Endothelial cell of umbilical vein (primary cell): ENCODE measurements at regions of chr13 and their contacts with region 1.

Region 1: DNA sequence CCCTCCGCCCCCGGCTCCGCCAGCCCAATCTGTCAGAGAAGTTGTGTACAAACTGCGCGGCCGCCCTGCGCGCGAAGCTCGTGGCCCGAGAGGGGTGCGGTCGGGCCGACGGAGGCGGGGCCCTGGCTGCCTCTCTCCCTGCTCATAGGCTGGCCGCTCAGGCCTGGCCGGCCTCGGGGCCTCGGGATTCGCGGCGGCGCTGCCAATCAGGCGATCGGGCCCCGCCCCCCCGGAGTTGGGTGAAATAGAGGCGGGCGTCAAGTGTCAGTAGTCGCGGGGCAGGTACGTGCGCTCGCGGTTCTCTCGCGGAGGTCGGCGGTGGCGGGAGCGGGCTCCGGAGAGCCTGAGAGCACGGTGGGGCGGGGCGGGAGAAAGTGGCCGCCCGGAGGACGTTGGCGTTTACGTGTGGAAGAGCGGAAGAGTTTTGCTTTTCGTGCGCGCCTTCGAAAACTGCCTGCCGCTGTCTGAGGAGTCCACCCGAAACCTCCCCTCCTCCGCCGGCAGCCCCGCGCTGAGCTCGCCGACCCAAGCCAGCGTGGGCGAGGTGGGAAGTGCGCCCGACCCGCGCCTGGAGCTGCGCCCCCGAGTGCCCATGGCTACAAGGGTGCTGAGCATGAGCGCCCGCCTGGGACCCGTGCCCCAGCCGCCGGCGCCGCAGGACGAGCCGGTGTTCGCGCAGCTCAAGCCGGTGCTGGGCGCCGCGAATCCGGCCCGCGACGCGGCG is at the start of gene KLF5:
- DNase-seq: peak; percentile 95
- H3K4me3 ChIP-seq: peak within 1 kb of the TSS; percentile 42 to 57 (median 57)
- H3K27ac ChIP-seq: peak within 1 kb of the TSS; percentile 5
- H3K4me1 ChIP-seq: peaks cover 37% of the 10 kb centered on the region
- H3K27me3 ChIP-seq: no peaks in the 10 kb centered on the region
- CTCF ChIP-seq: no peak
- POLR2A ChIP-seq: no peak
- total RNA-seq, gene KLF5: 1.7 and 1.9 TPM in 2 replicates

Region 2: GRCh38 chr13:72781451-72782439 is 277.2 kb before region 1 on chr13 and contains the starts of genes DIS3 and PIBF1:
- CTCF ChIA-PET with region 1: no interaction called
- POLR2A ChIA-PET with region 1: no interaction called
- dilution Hi-C with region 1: no loop called
- intact Hi-C with region 1: loop called (anchors 2 kb)
- DNase-seq: peak; percentile 98
- H3K4me3 ChIP-seq: peak within 1 kb of the TSS; percentile 69 to 96 (median 77)
- H3K27ac ChIP-seq: peak within 1 kb of the TSS; percentile 71
- H3K4me1 ChIP-seq: peaks cover 25% of the 10 kb centered on the region
- H3K27me3 ChIP-seq: no peaks in the 10 kb centered on the region
- CTCF ChIP-seq: no peak
- POLR2A ChIP-seq: peak; percentile 77
- total RNA-seq, gene DIS3: 31.4 and 32.8 TPM in 2 replicates
- total RNA-seq, gene PIBF1: 18.2 and 18.4 TPM in 2 replicates

Region 3: GRCh38 chr13:72839831-72840426 is 219.0 kb before region 1 on chr13:
- CTCF ChIA-PET with region 1: interaction called, 3 read pairs
- POLR2A ChIA-PET with region 1: no interaction called
- dilution Hi-C with region 1: no loop called
- intact Hi-C with region 1: loop called (anchors 5 kb)
- DNase-seq: peak; percentile 45
- H3K4me3 ChIP-seq: no peak overlapping the region
- H3K27ac ChIP-seq: no peak overlapping the region
- H3K4me1 ChIP-seq: no peaks in the 10 kb centered on the region
- H3K27me3 ChIP-seq: no peaks in the 10 kb centered on the region
- CTCF ChIP-seq: peak; percentile 69 to 75
- POLR2A ChIP-seq: no peak

Region 4: DNA sequence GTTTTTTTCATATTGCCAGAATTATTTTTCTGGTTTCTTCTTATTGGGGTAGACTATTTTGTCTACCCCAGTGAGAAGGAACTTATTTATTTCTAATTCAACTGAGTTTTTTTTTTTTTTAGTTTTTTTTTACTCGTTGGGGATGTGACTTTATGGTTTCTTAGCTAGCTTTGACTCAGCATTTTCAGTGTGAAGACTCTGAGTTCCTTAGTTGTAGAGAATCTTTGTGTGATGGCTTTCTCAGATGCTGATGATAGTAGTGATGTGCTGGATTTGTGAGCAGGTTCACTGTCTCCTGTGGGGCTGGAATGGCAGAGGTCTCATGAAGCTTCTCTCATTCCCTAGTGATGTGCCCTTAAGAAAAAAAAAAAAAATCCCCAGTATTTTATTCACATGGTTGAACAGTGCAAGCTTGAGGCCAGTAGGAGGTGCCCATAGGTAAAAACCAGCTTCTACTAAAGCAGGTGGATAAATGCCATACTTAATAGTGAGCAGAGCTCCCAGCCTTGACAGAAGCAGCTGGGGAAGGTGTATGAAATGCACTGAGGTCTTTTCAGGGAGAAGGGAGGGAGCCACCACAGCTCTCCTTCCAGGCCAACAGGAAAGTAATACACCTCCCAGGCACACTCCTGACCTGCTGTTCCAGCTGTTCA is 106.2 kb before region 1 on chr13:
- CTCF ChIA-PET with region 1: no interaction called
- POLR2A ChIA-PET with region 1: no interaction called
- dilution Hi-C with region 1: no loop called
- intact Hi-C with region 1: no loop called
- DNase-seq: no peak
- H3K4me3 ChIP-seq: no peak overlapping the region
- H3K27ac ChIP-seq: no peak overlapping the region
- H3K4me1 ChIP-seq: no peaks in the 10 kb centered on the region
- H3K27me3 ChIP-seq: no peaks in the 10 kb centered on the region
- CTCF ChIP-seq: no peak
- POLR2A ChIP-seq: no peak

Region 5: DNA sequence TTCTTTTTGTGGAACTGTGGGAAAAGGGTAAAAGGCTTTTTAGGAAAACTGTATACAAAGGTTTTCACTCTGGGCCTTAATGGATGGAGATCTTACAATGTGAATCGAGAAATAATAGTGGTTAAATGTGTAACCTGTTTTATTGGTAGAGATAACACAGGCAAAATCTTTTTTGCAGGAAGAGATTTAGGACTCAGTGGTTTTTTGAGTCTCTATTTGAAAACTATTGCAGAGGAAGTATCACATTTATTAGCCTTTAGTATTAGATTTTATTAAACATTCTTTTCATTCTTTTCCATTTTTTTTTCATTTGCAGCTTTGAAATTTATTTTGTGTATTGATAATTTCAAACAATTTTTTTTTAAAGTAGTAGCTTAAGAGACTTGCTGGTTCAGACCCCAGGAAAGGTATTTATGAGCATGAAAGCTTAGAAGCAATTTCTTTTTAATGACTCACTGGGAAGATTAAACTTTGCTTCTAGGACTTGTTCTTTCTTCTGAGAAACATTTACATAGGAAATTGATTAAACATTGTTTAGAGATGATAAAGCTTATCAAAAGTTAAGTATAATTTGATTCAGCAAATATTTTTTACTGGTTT is 10.4 kb after region 1 on chr13:
- CTCF ChIA-PET with region 1: interaction called, 10 read pairs
- POLR2A ChIA-PET with region 1: interaction called, 12 read pairs
- dilution Hi-C with region 1: no loop called
- intact Hi-C with region 1: no loop called
- DNase-seq: no peak
- H3K4me3 ChIP-seq: no peak overlapping the region
- H3K27ac ChIP-seq: no peak overlapping the region
- H3K4me1 ChIP-seq: no peaks in the 10 kb centered on the region
- H3K27me3 ChIP-seq: no peaks in the 10 kb centered on the region
- CTCF ChIP-seq: no peak
- POLR2A ChIP-seq: no peak

Region 6: DNA sequence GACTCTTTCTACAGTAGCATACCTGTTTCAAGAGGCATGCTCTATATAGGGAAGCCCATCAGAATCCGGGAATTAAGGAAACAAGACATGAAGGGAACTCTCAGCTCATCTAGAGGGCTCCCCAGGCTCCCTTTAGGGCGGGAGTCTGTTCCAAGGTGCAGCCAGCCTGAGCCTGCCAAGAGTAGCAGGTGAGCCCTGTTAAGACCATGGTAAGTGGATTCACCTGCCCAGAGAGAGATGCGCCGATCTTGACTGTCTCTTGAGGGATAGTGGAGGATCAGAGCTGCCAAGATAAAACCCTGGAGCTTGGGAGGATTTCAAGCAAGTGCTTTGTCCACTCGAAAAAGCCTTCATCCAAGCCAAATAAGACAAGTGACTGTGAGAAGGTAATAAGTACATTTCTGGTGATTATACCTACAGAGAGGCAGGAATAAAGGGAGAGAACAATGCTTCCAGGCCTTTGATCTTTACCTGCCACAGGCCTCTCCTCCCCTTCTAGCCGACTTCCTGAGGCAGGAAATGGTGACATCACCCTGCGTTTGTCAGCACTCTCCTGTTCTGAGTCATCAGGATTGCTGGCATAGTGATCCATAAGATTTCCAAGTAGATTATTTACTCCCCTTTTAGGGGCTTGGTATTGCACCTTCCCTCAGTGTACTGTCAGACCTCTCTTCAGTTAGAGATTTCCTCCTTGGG is 31.4 kb after region 1 on chr13:
- CTCF ChIA-PET with region 1: interaction called, 5 read pairs
- POLR2A ChIA-PET with region 1: no interaction called
- dilution Hi-C with region 1: no loop called
- intact Hi-C with region 1: loop called (anchors 1 kb)
- DNase-seq: peak; percentile 79
- H3K4me3 ChIP-seq: no peak overlapping the region
- H3K27ac ChIP-seq: peak overlapping the region; percentile 48
- H3K4me1 ChIP-seq: peaks cover 10% of the 10 kb centered on the region
- H3K27me3 ChIP-seq: no peaks in the 10 kb centered on the region
- CTCF ChIP-seq: no peak
- POLR2A ChIP-seq: no peak

Region 7: DNA sequence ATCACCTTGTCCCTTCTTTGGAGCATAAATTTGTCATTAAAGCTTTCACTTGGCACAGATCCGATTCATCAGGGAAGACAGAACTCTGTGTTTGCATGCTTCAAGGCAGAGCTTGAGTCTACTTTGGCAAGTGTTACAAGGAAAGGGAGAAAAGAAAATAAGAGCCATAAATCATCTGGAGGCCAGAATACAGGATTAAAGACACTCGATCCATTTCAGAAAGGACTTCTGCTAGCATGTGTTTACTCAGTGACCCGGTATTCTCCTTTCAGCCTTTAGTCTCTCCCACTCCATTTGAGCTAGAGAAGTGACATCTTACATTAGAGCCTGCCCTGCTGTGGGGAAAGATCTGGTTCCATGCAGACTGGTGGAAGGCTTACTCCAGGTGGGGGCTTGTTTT is 306.3 kb after region 1 on chr13:
- CTCF ChIA-PET with region 1: no interaction called
- POLR2A ChIA-PET with region 1: no interaction called
- dilution Hi-C with region 1: no loop called
- intact Hi-C with region 1: no loop called
- DNase-seq: no peak
- H3K4me3 ChIP-seq: no peak overlapping the region
- H3K27ac ChIP-seq: no peak overlapping the region
- H3K4me1 ChIP-seq: no peaks in the 10 kb centered on the region
- H3K27me3 ChIP-seq: no peaks in the 10 kb centered on the region
- CTCF ChIP-seq: no peak
- POLR2A ChIP-seq: no peak

Region 8: DNA sequence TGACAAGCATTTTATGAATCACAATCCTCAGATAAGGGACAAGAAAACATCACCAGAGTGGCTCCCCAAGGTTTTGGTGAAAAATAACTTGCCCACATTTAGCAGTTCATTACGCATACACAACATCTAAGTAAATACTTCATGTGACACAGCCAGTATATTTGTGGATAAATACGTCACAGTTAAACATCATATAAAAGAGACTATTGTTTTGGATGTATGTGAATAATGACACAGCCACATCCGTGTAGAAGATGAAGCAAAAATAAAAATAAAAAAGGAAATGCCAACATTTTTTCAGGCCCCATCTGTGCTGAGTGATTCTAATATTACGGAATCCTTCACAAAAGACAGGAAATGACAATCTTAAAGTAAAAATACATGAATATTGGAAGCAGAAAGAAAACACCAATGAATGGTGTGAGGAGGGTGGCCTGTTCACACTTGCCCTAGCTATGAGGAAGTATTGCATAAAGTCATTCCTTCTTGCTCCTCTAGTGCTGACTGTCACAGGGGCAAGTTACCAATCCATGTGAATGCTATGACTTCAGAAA is 618.2 kb after region 1 on chr13:
- CTCF ChIA-PET with region 1: no interaction called
- POLR2A ChIA-PET with region 1: no interaction called
- dilution Hi-C with region 1: no loop called
- intact Hi-C with region 1: loop called (anchors 2 kb)
- DNase-seq: peak; percentile 90
- H3K4me3 ChIP-seq: no peak overlapping the region
- H3K27ac ChIP-seq: peak overlapping the region; percentile 92
- H3K4me1 ChIP-seq: peaks cover 19% of the 10 kb centered on the region
- H3K27me3 ChIP-seq: no peaks in the 10 kb centered on the region
- CTCF ChIP-seq: no peak
- POLR2A ChIP-seq: no peak

Region 9: GRCh38 chr13:73708393-73708985 is 649.6 kb after region 1 on chr13:
- CTCF ChIA-PET with region 1: no interaction called
- POLR2A ChIA-PET with region 1: no interaction called
- dilution Hi-C with region 1: no loop called
- intact Hi-C with region 1: loop called (anchors 1 kb)
- DNase-seq: peak; percentile 71
- H3K4me3 ChIP-seq: no peak overlapping the region
- H3K27ac ChIP-seq: no peak overlapping the region
- H3K4me1 ChIP-seq: no peaks in the 10 kb centered on the region
- H3K27me3 ChIP-seq: no peaks in the 10 kb centered on the region
- CTCF ChIP-seq: peak; percentile 61 to 66
- POLR2A ChIP-seq: no peak